Colonic mucosa (tissue), 4 donors: ENCODE measurements at regions of chr5 and their contacts with region 1.

Region 1: GRCh38 chr5:102971697-102972293 is 148.1 kb downstream of the GIN1 start:
- DNase-seq: no peak
- H3K4me3 ChIP-seq: no peak overlapping the region
- H3K27ac ChIP-seq: no peak overlapping the region
- H3K4me1 ChIP-seq: no peaks in the 10 kb centered on the region
- H3K27me3 ChIP-seq: no peaks in the 10 kb centered on the region
- CTCF ChIP-seq: no peak

Region 2: DNA sequence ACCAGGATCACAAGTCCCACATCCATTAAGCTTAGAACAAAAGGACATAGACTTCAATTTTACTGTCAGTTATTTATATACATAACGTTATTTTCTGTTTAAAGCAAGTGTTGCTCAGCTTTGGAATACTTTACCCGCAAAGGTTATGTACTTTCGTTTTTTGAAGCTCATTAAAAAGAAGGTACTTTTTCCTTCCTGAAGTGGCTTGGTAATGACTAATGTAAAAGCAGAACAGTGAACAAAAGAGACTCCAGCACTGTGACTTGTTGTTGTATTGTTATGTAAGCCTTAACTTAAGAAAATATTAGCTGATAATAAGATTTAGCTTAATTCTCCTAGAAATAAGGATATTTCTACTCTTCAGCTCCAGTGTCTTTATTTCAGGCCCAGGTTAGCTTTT is 375.7 kb before region 1 on chr5:
- intact Hi-C with region 1: loop called (anchors 10 kb)
- DNase-seq: no peak
- H3K4me3 ChIP-seq: no peak overlapping the region
- H3K27ac ChIP-seq: no peak overlapping the region
- H3K4me1 ChIP-seq: no peaks in the 10 kb centered on the region
- H3K27me3 ChIP-seq: no peaks in the 10 kb centered on the region
- CTCF ChIP-seq: no peak

Region 3: DNA sequence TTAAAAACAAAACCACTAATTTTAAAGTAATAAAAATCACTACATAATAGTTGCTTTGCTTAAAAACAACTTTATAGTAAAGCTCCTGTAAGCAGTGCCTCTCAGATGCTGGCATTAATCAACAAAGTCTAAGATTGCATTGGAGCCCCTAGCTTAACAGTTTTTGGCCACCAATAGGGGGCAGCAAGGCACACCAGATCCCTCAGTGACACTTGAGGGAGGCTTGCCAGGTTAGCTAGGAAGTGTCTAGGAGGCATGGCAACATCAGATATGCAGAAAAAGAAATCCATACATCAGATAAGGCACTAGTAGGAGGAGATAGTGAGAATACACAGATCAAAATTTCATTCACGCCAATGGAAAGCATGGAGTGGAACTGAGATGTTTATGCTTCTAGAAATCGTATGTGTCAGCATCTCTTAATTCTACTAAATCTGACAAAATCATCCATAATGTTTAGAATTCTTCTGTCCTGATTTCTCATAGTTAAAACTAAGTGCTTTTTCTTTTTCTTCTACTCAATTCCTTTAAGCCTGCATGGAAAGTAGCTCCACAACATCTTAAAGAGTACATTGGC is 290.3 kb before region 1 on chr5:
- intact Hi-C with region 1: no loop called
- DNase-seq: peak; percentile 72
- H3K4me3 ChIP-seq: no peak overlapping the region
- H3K27ac ChIP-seq: no peak overlapping the region
- H3K4me1 ChIP-seq: no peaks in the 10 kb centered on the region
- H3K27me3 ChIP-seq: no peaks in the 10 kb centered on the region
- CTCF ChIP-seq: peak; percentile 74

Region 4: DNA sequence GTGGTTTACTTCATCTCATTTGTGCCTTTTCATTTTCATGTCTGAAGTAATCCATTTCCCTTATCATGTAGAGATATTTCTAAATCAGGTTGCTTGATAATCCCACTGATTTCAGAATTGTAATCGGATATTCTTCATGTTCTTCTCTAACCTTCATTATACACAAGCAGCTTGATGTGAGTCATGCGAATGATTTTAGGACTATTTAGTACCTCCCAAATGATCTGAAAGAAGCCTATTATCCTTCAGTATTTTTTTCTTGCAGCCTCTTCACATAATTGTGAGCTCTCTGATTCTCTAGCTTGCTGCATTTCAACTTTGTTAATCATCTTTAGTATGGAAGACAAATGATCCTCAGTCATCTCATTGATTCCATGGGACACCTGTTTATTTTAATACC is 33.9 kb before region 1 on chr5:
- intact Hi-C with region 1: no loop called
- DNase-seq: no peak
- H3K4me3 ChIP-seq: no peak overlapping the region
- H3K27ac ChIP-seq: no peak overlapping the region
- H3K4me1 ChIP-seq: no peaks in the 10 kb centered on the region
- H3K27me3 ChIP-seq: no peaks in the 10 kb centered on the region
- CTCF ChIP-seq: no peak

Region 5: GRCh38 chr5:103010168-103010567 is 38.4 kb after region 1 on chr5:
- intact Hi-C with region 1: no loop called
- DNase-seq: no peak
- H3K4me3 ChIP-seq: no peak overlapping the region
- H3K27ac ChIP-seq: no peak overlapping the region
- H3K4me1 ChIP-seq: no peaks in the 10 kb centered on the region
- H3K27me3 ChIP-seq: no peaks in the 10 kb centered on the region
- CTCF ChIP-seq: no peak